Vagina (tissue), 2 donors: ENCODE measurements at regions of chr19 and their contacts with region 1.

Region 1: GRCh38 chr19:45817010-45817724 is 2.1 kb upstream of the RSPH6A start:
- DNase-seq: peak in 1 of 2 donors; percentile 78
- H3K4me3 ChIP-seq: no peak overlapping the region
- H3K27ac ChIP-seq: peak overlapping the region; percentile 60
- H3K4me1 ChIP-seq: peaks cover 18% of the 10 kb centered on the region
- H3K27me3 ChIP-seq: no peaks in the 10 kb centered on the region
- CTCF ChIP-seq: peak; percentile 90 to 97 (median 94)
- POLR2A ChIP-seq: no peak

Region 2: DNA sequence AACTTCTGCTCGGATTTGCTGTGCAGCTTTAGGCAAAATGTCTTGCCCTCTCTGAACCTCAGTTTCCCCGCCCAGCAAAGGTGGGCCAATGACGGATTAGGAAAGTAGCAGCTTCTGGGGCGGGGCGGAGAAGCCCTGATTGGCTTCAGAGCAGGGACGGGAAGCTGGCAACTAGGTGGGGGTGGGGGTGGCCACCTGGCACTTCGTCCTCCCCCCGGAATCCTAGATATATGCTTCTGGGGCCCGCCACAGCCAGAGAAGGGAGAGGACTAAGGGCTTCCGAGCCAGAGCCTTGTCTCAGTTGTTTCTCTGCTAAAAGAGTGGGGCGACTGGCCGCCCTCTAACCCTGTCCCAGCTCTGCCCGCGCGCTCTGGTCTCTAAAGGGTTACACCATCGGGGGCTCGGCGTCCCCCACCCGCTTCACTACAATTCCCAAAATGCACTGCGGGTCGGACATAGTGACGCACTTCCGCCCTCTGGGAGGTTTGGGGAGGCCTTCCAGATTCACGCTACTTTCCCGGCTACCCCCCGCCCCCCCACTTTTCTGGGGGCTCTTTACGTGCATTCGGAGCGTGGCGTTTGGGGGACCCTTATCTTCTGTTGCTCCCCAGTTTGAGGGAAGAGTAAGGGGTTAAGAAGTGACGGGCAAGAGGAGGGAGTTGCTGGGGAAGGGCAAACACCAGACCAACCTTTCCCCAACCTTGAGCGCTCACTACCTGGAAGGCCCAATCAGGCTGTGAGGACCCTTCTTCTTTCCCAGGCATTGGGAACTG is 69.4 kb after region 1 on chr19:
- intact Hi-C with region 1: loop called (anchors 10 kb)
- DNase-seq: peak in 1 of 2 donors; percentile 94
- H3K4me3 ChIP-seq: peak overlapping the region; percentile 72 to 84
- H3K27ac ChIP-seq: peak overlapping the region; percentile 93
- H3K4me1 ChIP-seq: peaks cover 36% of the 10 kb centered on the region
- H3K27me3 ChIP-seq: no peaks in the 10 kb centered on the region
- CTCF ChIP-seq: no peak
- POLR2A ChIP-seq: peak in 1 of 2 donors; percentile 49

Region 3: DNA sequence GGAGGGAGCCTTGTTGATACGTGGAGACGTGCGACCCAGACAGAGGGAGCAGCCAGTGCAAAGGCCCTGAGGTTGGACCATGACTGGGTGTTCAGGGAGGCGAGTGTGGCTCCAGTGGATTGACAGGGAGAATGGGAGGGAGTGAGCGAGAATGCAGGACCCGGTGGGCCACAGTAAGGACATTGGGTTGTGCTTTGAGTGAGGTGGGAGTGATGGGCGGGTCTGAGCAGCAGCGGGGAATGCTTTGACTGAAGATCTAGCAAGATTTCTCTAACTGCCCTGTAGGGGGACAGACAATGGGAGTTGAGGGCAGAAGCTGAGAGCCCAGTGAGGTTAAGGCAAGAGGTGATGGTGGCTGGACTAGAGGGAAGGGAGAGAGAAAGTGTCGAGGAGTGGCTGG is 105.1 kb after region 1 on chr19:
- intact Hi-C with region 1: no loop called
- DNase-seq: no peak
- H3K4me3 ChIP-seq: no peak overlapping the region
- H3K27ac ChIP-seq: no peak overlapping the region
- H3K4me1 ChIP-seq: no peaks in the 10 kb centered on the region
- H3K27me3 ChIP-seq: no peaks in the 10 kb centered on the region
- CTCF ChIP-seq: no peak
- POLR2A ChIP-seq: no peak

Region 4: DNA sequence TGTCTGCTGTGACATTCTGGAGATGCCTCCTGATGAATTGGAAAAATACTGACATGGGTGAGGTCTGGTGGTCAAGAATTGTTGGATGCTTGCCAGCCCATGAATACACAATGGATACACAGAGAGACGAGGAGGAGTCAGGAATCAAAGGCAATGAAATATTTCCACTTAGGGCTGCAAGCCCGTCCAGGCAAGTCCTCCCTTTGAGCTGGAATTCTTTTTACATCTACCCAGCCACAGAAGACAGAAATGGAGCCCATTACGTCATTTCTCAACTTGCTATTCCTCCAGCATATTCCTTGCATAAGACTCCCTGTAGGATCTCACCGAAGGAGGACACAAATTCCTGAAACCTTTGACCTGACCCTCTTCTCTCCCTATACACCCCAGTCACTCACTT is 239.4 kb after region 1 on chr19:
- intact Hi-C with region 1: no loop called
- DNase-seq: no peak
- H3K4me3 ChIP-seq: no peak overlapping the region
- H3K27ac ChIP-seq: no peak overlapping the region
- H3K4me1 ChIP-seq: no peaks in the 10 kb centered on the region
- H3K27me3 ChIP-seq: no peaks in the 10 kb centered on the region
- CTCF ChIP-seq: no peak
- POLR2A ChIP-seq: no peak